Calu3 (cell line): ENCODE measurements at regions of chr5 and their contacts with region 1.

Region 1: DNA sequence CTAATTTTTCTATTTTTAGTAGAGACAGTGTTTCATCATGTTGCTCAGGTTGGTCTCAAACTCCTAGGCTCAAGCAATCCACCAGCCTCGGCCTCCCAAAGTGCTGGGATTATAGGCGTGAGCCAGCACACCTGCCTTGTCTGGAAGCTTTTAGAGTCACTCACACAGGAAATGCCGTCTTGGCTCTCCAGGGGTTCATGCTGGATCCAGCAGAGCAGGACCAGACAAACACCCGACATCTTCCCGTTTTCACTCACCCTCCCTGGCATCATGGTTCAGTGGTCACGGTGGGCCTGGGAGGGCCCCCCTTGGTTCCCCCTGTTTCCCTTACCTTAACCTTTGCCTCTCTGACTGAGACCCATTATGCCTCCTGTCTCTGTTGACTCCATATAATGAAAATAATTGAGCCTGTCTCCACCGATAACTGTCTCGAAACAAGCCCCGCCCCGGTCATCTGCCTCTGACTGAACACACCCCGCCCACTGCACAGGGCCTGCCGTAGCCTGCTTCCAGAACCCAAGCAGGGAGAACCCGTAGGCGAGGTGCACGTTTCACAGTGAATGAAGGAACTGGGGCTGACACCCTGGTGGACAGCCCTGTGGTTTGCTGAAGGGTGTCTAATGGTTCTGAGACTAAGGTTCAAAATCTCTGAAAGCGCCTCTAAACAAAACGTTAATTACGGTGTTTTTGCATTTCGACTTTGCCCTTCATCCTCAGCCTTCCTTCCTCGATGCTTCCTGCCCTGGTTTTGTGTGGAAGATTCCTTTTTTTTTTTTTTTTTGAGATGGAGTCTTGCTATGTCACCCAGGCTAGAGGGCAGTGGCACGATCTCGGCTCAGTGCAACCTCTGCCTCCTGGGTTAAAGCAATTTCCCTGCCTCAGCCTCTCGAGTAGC is 39.7 kb upstream of the SPRY4 start:
- DNase-seq: no peak
- H3K4me3 Mint-ChIP-seq: no peak overlapping the region
- H3K27ac Mint-ChIP-seq: no peak overlapping the region
- H3K4me1 Mint-ChIP-seq: peaks cover 57% of the 10 kb centered on the region
- H3K27me3 Mint-ChIP-seq: no peaks in the 10 kb centered on the region
- CTCF ChIP-seq: no peak

Region 2: DNA sequence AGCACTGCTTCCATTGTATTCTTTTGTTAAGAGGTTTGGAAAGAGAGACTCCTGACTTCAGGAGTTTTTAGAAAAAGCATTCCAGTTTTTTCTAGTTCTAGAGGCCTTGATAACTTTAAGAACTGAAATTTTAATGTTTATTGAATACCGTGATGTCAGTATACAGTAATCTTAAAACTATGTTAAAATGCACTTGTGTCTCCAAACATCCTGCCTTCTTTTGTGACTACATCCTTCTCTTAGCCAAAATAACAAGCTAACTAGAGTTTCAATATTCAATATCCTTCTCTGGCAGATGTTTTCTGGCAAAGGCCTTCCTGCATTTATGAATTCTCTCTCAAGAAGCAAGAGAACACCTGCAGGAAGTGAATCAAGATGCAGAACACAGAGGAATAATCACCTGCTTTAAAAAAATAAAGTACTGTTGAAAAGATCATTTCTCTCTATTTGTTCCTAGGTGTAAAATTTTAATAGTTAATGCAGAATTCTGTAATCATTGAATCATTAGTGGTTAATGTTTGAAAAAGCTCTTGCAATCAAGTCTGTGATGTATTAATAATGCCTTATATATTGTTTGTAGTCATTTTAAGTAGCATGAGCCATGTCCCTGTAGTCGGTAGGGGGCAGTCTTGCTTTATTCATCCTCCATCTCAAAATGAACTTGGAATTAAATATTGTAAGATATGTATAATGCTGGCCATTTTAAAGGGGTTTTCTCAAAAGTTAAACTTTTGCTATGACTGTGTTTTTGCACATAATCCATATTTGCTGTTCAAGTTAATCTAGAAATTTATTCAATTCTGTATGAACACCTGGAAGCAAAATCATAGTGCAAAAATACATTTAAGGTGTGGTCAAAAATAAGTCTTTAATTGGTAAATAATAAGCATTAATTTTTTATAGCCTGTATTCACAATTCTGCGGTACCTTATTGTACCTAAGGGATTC is 212.8 kb before region 1 on chr5:
- CTCF ChIA-PET with region 1: no interaction called
- intact Hi-C with region 1: loop called (anchors 5 kb)
- DNase-seq: peak; percentile 78
- H3K4me3 Mint-ChIP-seq: no peak overlapping the region
- H3K27ac Mint-ChIP-seq: no peak overlapping the region
- H3K4me1 Mint-ChIP-seq: no peaks in the 10 kb centered on the region
- H3K27me3 Mint-ChIP-seq: no peaks in the 10 kb centered on the region
- CTCF ChIP-seq: peak; percentile 80

Region 3: DNA sequence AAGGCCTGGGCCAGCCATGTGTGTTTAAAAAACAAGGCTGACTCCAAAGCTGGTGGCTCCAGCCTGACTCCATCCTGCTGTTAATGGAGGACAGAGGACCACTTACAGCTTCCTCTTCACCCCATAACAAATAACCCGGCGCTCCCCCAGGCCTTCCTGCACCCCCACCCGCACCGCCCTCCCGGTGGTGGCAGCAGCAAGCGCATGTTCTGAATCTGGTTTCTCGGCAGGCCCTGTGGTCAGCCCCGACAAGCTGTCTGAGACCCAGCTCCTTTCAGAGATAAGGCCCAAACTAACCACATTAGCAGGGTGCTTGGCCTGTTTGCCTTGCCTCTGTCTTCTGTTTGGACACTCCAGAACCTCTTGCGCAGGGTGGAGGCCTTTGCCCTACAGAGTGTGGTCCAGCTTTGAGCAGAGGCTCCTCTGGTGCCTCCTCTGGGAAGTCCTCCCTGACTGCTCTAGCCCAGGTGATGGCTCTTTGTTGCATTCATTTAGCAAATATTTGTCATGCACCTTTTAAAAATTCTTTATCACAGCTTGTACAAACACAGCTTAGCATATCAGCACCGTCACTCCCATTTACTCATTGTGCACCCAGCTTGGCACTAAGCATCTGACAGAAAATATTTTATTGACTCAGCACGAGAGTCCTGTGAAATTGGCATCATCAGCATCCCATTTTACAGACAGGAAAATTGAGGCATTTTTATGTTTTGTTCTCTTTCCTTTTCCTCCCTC is 177.5 kb before region 1 on chr5:
- CTCF ChIA-PET with region 1: no interaction called
- intact Hi-C with region 1: no loop called
- DNase-seq: no peak
- H3K4me3 Mint-ChIP-seq: no peak overlapping the region
- H3K27ac Mint-ChIP-seq: no peak overlapping the region
- H3K4me1 Mint-ChIP-seq: no peaks in the 10 kb centered on the region
- H3K27me3 Mint-ChIP-seq: peaks cover 31% of the 10 kb centered on the region
- CTCF ChIP-seq: no peak

Region 4: DNA sequence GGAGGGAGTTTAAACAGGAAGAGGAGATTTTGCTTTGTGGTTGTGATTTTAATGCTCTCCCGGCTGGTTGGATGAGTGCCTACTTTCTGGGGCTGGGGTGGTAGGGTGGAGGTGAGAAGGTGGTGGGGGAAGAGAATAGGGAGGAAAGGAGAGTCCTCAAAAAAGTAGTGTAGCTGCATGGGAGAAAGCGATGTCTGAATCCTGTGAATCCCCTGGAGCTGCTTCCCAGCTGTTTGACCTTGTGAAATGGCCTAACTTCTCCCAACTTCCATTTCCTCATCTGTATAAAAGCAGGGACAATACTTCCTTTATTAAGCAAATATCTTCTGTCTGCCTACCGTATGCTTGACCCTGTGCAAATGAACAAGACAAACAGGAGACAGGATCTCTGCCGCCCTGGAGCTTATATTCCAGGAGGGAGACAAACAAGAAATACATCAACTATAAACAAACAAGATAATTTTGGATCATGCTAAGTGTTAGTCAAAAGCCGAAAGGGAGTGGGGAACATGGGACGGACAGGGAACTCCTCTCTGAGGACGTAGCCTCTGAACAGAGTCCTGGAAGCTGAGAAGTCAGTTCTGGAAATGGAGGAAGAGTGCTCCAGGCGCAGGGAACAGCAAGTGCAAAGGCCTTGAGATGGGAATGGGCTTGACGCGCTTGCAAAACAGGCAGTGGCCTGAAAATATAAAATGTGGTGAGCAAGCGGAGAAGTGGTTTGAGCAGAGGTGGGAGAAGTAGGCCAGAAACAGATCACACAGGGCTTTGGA is 143.2 kb before region 1 on chr5:
- CTCF ChIA-PET with region 1: no interaction called
- intact Hi-C with region 1: loop called (anchors 5 kb)
- DNase-seq: no peak
- H3K4me3 Mint-ChIP-seq: no peak overlapping the region
- H3K27ac Mint-ChIP-seq: no peak overlapping the region
- H3K4me1 Mint-ChIP-seq: peaks cover 60% of the 10 kb centered on the region
- H3K27me3 Mint-ChIP-seq: peaks cover 14% of the 10 kb centered on the region
- CTCF ChIP-seq: no peak